K562 (cell line): ENCODE measurements at regions of chr9 and their contacts with region 1.

Region 1: DNA sequence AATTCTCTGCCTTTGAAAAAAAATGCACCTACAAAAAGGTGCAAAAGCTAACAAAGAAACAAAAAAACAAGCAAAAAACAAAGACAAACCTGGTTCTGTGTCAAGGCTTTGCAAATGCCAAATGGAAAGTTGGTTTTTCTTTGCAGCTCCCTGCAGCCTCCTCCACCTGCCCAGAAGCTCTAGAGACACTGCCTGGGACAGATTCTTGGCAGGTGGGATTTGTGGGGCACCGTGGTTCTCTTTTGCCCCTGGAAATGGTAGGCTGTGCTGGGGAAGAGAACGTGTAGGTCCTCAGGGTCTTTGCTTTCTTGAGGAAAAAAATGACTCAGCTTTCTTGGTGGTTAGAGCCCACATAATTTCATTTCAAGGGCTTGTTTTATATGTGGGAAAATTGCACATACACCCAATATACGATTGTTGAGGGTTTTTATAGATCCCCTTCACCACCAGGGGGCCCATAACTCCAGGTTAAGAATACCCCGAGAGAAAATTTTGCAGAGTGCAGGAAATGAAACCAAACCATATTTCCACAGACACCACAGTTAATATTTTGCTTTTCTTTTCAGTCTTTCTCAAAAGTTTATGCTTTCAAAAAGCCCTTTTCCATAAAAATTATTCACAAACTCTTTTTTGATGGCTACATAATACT is 58.7 kb downstream of the NXNL2 start:
- DNase-seq: peak; percentile 35 to 54 (median 36)
- ATAC-seq: peak; percentile 72; the same call in 2 of the 3 replicates
- H3K4me3 ChIP-seq: no peak overlapping the region
- H3K27ac ChIP-seq: no peak overlapping the region
- H3K4me1 ChIP-seq: no peaks in the 10 kb centered on the region; a peak in 1 of 5 replicates
- H3K27me3 ChIP-seq: peaks cover 0 to 7% of the 10 kb centered on the region in 2 experiments; a peak in 2 of 5 replicates
- CTCF ChIP-seq: peak; percentile 43 to 70 (median 51); a peak in 4 of 6 replicates
- EP300 ChIP-seq: no peak
- POLR2A ChIP-seq: no peak
- RAD21 ChIP-seq: peak; percentile 76 to 77

Region 2: DNA sequence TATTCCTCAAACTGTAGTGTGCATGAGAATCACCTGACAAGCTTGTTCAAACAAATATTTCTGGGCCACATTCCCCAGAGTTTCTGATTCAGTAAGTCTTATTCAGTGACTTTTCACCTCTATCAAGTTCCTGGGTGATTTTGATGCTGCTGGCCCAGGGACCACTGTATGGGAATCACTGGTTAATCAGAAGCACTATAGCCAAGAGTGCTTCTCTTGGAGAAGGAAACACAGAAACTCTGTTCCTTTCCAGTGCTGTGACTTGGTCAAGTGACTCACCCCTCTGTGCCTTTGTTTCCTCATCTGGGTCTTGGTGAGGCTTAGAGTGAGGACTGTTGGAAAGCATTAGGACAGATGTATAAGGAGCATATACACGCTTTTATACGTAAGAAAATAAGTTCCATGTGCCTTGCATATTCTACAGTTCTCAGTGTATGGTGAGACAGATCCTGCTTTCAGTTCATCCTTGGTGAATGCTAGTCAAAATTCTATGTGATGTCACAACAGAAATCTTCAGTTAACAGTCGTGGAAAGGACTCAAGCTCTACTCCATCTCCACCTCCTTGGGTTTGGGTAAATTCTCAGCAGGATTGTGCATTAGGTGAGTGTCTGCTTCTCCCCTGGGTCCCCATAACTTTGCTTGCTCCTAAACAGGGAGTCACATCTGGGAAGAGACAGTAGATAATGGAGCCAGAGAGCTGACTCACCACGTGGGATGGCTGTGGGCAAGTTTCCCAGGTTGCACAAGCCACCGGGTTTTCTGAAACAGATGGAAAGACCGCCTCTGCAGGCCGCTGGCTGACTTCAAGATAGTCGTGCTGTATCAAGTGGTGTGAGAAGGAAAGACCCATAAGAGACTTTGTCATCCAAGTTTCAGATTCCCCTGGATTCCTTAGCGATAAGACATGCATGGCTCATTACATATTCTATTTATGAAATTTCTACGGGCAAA is 58.3 kb after region 1 on chr9:
- CTCF ChIA-PET with region 1: no interaction called
- POLR2A ChIA-PET with region 1: no interaction called
- in situ Hi-C with region 1: no loop called
- intact Hi-C with region 1: loop called (anchors 10 kb)
- DNase-seq: peak; percentile 5 to 53 (median 22)
- ATAC-seq: peak; percentile 46; the same call in 2 of the 3 replicates
- H3K4me3 ChIP-seq: no peak overlapping the region
- H3K27ac ChIP-seq: no peak overlapping the region
- H3K4me1 ChIP-seq: peaks cover 0 to 4% of the 10 kb centered on the region in 2 experiments; a peak in 3 of 5 replicates
- H3K27me3 ChIP-seq: no peaks in the 10 kb centered on the region
- CTCF ChIP-seq: peak in 2 of 3 experiments; percentile 11 to 41; a peak in 2 of 6 replicates
- EP300 ChIP-seq: no peak
- POLR2A ChIP-seq: no peak
- RAD21 ChIP-seq: no peak

Region 3: GRCh38 chr9:88741335-88741734 is 147.7 kb after region 1 on chr9:
- CTCF ChIA-PET with region 1: no interaction called
- POLR2A ChIA-PET with region 1: no interaction called
- in situ Hi-C with region 1: no loop called
- intact Hi-C with region 1: loop called (anchors 1 kb)
- DNase-seq: peak; percentile 30 to 52 (median 34)
- ATAC-seq: peak; percentile 78
- H3K4me3 ChIP-seq: no peak overlapping the region
- H3K27ac ChIP-seq: no peak overlapping the region
- H3K4me1 ChIP-seq: no peaks in the 10 kb centered on the region; a peak in 1 of 5 replicates
- H3K27me3 ChIP-seq: peaks cover 2 to 5% of the 10 kb centered on the region in 2 experiments; a peak in 2 of 5 replicates
- CTCF ChIP-seq: peak; percentile 56 to 63 (median 57)
- EP300 ChIP-seq: no peak
- POLR2A ChIP-seq: no peak
- RAD21 ChIP-seq: peak in 1 of 2 experiments; percentile 63; a peak in 2 of 4 replicates

Region 4: DNA sequence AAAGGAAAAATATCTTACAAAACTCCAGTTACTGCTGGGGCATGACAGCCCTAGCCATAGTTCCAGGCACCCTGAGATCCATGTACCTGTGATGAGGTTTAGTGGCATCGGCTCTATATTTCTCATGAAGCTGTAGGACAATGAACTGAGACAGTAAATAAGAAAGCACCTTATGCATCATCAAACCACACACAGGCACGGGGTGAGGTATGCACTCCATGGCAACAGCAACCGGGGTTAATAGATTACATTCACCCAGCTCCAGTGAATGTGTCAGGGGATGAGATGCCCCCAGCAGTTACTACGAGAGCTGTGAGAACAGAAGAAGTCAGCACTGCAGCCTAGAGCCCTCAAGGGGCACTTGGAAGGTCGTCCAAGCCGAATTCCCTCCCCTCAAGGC is 235.6 kb after region 1 on chr9:
- CTCF ChIA-PET with region 1: no interaction called
- POLR2A ChIA-PET with region 1: no interaction called
- in situ Hi-C with region 1: no loop called
- intact Hi-C with region 1: no loop called
- DNase-seq: no peak
- ATAC-seq: no peak
- H3K4me3 ChIP-seq: no peak overlapping the region
- H3K27ac ChIP-seq: no peak overlapping the region
- H3K4me1 ChIP-seq: no peaks in the 10 kb centered on the region; a peak in 1 of 5 replicates
- H3K27me3 ChIP-seq: peaks cover 0 to 13% of the 10 kb centered on the region in 2 experiments; a peak in 3 of 5 replicates
- CTCF ChIP-seq: no peak
- EP300 ChIP-seq: no peak
- POLR2A ChIP-seq: no peak
- RAD21 ChIP-seq: no peak

Region 5: DNA sequence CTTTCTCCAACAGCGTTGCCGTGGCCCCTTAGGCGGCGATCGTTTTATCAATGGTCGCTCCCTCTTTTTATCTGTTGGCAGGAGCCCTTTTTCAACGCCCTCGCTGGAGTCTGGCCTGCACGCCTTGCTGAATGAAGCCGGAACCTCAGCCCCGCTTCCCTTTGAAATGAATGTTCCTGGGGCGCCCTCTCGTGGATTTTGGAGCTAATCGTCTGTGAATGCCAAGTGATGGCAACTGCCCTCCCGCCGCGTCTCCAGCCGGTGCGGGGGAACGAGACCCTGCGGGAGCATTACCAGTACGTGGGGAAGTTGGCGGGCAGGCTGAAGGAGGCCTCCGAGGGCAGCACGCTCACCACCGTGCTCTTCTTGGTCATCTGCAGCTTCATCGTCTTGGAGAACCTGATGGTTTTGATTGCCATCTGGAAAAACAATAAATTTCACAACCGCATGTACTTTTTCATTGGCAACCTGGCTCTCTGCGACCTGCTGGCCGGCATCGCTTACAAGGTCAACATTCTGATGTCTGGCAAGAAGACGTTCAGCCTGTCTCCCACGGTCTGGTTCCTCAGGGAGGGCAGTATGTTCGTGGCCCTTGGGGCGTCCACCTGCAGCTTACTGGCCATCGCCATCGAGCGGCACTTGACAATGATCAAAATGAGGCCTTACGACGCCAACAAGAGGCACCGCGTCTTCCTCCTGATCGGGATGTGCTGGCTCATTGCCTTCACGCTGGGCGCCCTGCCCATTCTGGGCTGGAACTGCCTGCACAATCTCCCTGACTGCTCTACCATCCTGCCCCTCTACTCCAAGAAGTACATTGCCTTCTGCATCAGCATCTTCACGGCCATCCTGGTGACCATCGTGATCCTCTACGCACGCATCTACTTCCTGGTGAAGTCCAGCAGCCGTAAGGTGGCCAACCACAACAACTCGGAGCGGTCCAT is 407.6 kb after region 1 on chr9:
- CTCF ChIA-PET with region 1: interaction called, 13 read pairs
- POLR2A ChIA-PET with region 1: no interaction called
- in situ Hi-C with region 1: loop called (anchors 5 kb)
- intact Hi-C with region 1: loop called (anchors 1 kb)
- DNase-seq: peak; percentile 30 to 83 (median 49)
- ATAC-seq: peak; percentile 94
- H3K4me3 ChIP-seq: no peak overlapping the region
- H3K27ac ChIP-seq: no peak overlapping the region
- H3K4me1 ChIP-seq: peaks cover 3 to 9% of the 10 kb centered on the region in 2 experiments; a peak in 3 of 5 replicates
- H3K27me3 ChIP-seq: peaks cover 0 to 14% of the 10 kb centered on the region in 2 experiments; a peak in 2 of 5 replicates
- CTCF ChIP-seq: peak; percentile 65 to 83 (median 74)
- EP300 ChIP-seq: no peak
- POLR2A ChIP-seq: no peak
- RAD21 ChIP-seq: peak; percentile 78 to 83